ENCODE measurements at regions of chr7 and their contacts with region 1.

Region 1: DNA sequence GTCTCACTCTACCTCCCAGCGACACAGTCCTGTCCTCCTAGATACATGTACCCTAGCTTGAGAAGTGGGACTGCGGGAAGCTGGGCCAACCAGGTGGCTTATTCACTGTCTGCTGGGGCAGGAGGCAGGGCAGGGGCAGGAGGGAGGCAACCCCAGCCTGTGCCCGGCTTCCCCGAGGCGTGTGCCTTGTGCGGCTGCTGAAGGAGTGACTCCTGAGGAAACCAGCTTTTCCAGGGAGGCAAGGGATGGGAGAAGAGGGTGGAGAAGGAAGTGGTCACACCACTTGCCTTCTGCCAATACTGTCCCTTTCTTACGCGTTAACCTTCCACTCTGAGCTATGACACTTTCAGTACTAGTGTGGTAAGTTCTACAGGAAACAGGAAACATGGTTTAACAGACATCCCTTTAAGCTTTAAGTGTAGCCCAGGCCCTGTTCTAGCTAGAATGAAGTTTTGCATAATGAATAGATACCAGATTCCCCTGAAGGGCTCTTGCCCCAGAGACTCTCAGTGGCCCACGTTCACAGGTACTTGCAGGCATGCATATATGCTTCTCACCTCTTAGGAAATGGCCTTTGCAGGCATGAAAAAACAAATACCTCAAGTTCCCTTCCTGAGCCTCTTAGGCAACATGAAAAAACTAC is 40.6 kb downstream of the SYPL1 start:
- DNase-seq: peak in 1 of 2 donors; percentile 18
- H3K4me3 ChIP-seq: no peak overlapping the region
- H3K27ac ChIP-seq: peak overlapping the region; percentile 68 to 96 (median 91)
- H3K4me1 ChIP-seq: peaks cover 38 to 55% of the 10 kb centered on the region in 2 donors
- H3K27me3 ChIP-seq: no peaks in the 10 kb centered on the region
- CTCF ChIP-seq: no peak
- POLR2A ChIP-seq: no peak

Region 2: GRCh38 chr7:106112117-106112971 is 40.9 kb after region 1 on chr7 and contains the start of gene SYPL1:
- intact Hi-C with region 1: loop called (anchors 5 kb)
- DNase-seq: peak; percentile 94
- H3K4me3 ChIP-seq: peak within 1 kb of the TSS; percentile 43 to 83 (median 69)
- H3K27ac ChIP-seq: peak within 1 kb of the TSS; percentile 98 to 99 (median 99)
- H3K4me1 ChIP-seq: peaks cover 15 to 22% of the 10 kb centered on the region in 2 donors
- H3K27me3 ChIP-seq: no peaks in the 10 kb centered on the region
- CTCF ChIP-seq: peak in 1 of 6 experiments; percentile 10
- POLR2A ChIP-seq: peak; percentile 86 to 92
- total RNA-seq, gene SYPL1: 119 to 165 (median 132) TPM